HEK293 (cell line): ENCODE measurements at regions of chr1 and their contacts with region 1.

Region 1: GRCh38 chr1:25904943-25905679 is 1.1 kb downstream of the STMN1 start:
- H3K4me3 ChIP-seq: peak overlapping the region; percentile 75
- H3K27ac ChIP-seq: peak overlapping the region; percentile 40
- H3K4me1 ChIP-seq: peaks cover 5% of the 10 kb centered on the region
- CTCF ChIP-seq: peak; percentile 28; the same call in 1 of the 2 replicates

Region 2: DNA sequence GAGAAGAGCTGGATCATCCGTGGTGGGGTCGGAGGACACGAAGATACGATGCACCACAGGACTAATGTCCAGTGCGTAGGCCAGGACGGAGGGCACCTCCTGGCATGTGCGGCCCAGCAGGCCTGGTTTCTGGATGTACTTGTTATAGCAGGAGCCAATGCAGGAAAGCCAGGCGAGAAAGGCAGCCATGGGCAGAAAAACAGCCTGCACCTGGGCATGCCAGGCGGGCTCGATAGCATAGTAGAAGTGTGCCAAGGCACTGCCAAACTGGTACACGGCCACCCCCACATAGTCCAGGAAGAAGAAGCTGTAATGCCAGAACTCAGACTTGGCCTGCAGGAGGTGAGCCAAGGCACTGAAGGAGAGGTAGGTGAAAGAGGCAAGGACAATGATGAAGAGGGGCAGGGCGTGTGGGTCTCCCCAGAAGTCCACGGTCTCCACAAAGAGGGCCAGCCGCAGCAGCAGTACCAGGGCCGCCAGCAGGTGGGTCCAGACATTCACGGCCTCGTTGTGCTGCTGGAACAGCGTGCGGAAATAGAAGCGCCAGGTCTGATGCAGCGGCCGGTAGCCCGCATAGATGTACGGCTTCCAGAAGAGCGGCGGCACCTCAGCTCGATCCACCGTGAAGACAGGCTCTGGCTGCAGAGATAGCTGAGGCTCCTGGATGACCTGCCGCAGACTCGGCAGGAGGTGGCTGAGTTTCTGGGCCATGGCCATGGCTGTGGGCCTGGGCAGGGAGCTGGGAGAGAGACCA is 41.8 kb before region 1 on chr1:
- CTCF ChIA-PET with region 1: no interaction called
- POLR2A ChIA-PET with region 1: no interaction called
- H3K4me3 ChIP-seq: no peak overlapping the region
- H3K27ac ChIP-seq: no peak overlapping the region
- H3K4me1 ChIP-seq: no peaks in the 10 kb centered on the region
- CTCF ChIP-seq: no peak

Region 3: GRCh38 chr1:25874934-25875855 is 29.9 kb before region 1 on chr1 and contains the start of gene PAQR7:
- CTCF ChIA-PET with region 1: interaction called, 4 read pairs
- POLR2A ChIA-PET with region 1: interaction called, 10 read pairs
- H3K4me3 ChIP-seq: peak within 1 kb of the TSS; percentile 44
- H3K27ac ChIP-seq: peak within 1 kb of the TSS; percentile 42; the same call in 1 of the 2 replicates
- H3K4me1 ChIP-seq: no peaks in the 10 kb centered on the region
- CTCF ChIP-seq: peak; percentile 93

Region 4: DNA sequence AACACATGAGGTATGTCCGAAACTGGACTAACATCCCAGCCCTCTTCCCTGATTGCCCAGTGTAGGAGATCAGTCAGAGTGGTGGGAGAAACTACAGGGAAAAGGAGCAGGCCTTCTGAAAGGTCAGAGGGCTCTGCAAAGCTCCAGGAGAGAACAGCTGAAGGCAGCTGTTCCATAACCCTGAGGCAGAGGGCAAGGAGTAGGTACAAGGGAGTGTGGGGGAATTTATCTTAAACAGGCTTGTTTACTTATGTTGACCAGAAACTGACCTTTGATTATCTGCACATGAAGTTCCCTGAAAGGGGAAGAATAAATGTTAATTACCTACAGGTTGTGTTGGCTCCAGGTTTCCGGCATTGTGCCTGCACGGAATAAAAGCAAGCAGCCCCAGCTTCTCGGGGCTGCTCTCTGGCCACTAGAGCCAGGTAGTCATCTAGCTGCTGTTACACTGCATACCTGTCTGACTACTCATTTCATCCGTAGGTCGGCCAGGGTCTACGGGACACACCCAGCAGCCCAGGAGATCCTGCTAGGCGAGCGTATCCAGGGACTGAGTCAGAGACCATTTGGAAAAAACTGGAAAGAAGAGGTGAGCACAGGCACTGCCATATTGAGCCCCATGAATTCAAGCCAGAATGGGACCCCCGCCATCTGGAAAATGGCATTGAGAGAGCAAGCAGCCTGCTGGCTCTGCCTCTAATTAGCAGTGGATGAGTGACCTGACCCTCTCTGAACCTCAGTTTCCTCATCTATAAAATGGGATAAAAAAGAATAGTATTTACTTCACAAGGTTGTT is 14.7 kb before region 1 on chr1:
- CTCF ChIA-PET with region 1: interaction called, 35 read pairs
- POLR2A ChIA-PET with region 1: interaction called, 11 read pairs
- H3K4me3 ChIP-seq: no peak overlapping the region
- H3K27ac ChIP-seq: no peak overlapping the region
- H3K4me1 ChIP-seq: no peaks in the 10 kb centered on the region
- CTCF ChIP-seq: no peak

Region 5: DNA sequence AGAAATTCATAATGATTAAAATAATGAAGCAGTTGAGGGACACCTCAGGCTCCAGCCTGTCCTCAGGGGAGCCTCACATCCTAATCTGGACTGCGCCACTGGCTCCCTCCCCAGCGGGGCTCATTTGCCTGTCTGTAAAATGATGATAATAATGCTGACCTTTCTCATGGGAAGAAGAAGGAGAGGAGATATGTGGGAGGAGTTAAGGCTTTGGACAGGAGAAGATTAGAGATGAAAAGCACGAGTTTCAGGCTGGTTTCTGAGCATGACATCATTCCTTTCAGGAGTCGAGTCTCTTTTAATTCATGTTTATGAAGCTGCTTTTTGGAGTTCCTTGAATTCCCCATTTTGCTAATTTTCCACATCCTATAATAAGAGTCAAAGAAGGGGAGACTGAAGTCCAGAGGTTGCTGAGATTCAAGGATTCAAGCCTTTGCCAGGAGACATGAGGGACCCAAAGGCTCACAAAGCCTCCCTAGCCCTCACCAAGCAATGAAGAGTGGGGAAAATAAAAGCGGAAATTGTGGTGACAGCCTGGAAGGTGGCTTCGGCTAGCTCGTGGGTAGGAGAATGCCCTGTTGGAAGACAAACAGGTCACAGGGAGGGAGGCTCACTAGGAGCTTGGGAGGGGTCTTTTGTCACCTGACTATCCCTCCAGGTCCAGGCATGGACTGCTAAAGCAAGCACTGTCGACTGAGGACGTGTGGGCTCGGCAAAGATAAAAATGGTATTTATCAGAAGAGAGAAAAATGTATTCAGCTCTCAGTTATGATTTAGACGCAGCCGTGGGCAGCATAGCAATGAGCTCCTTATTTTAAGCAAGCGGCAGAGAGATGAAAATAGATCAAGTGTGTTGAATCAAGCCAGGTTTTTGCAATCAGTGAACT is 28.6 kb after region 1 on chr1:
- CTCF ChIA-PET with region 1: no interaction called
- POLR2A ChIA-PET with region 1: no interaction called
- H3K4me3 ChIP-seq: no peak overlapping the region
- H3K27ac ChIP-seq: no peak overlapping the region
- H3K4me1 ChIP-seq: no peaks in the 10 kb centered on the region
- CTCF ChIP-seq: no peak

Region 6: DNA sequence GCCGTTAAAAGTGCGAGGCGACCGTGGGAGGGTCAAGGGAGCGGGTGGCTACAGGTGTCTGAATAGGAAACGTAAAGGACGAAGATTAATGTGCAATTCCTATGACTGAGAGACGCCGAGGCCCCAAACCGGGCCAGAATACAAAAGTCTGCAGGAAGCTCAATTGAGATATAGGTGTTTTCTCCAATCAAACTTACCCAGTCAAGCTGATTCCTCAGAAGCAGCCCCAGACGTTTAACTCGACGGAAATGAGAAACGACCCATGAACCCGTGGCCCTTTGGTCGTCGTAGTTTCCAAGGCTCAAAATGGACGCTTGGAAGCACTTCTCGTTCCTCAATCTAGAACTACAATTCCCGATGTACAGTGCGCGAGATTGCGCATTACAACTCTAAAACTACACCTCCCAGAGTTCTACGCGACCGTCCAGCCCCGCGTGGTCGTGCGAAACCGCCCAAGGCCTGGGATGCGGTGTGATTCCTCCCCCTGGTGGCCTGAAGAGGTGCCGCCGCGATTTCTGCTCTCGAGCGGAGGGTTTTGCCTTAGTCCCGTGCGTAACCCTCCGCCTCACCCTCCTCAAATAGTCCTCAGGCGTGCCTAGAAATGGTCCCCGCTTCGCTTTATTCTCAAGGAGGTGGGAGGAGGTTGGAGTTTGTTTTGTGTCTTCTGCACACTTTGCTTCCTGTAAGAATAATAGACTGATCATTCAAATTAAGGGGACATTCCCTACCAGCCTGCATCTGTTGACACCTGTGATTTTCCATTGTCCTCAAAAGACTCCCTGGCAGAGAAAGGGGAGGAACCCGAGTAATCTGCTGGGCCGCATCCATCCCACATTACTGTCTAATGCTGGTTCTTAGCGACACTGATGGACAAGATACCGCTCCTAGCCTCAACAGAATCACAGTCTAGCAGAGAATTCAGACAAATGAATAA is 93.0 kb after region 1 on chr1 and contains the start of gene PAFAH2:
- CTCF ChIA-PET with region 1: interaction called, 11 read pairs
- POLR2A ChIA-PET with region 1: interaction called, 8 read pairs
- H3K4me3 ChIP-seq: peak within 1 kb of the TSS; percentile 62
- H3K27ac ChIP-seq: peak within 1 kb of the TSS; percentile 4; the same call in 1 of the 2 replicates
- H3K4me1 ChIP-seq: no peaks in the 10 kb centered on the region
- CTCF ChIP-seq: peak; percentile 100

Region 7: DNA sequence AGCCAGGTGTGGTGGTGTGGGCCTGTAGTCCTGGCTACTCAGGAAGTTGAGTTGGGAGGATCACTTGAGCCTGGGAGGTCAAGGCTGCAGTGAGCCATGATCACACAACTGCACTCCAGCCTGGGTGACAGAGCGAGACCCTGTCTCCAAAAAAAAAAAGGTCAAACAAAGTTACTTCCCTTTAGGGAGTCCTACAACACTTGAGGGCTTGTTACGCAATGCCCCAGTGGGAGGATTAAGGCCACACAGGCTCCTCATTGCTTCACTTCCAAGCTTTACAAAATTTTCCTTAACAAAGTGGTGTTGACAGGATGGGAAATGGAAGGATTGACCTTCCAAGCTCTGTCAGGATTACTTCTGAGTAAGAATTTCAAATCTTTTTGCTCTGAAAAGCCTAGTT is 110.2 kb after region 1 on chr1:
- CTCF ChIA-PET with region 1: no interaction called
- POLR2A ChIA-PET with region 1: no interaction called
- H3K4me3 ChIP-seq: no peak overlapping the region
- H3K27ac ChIP-seq: no peak overlapping the region
- H3K4me1 ChIP-seq: no peaks in the 10 kb centered on the region
- CTCF ChIP-seq: no peak